Adrenal gland (tissue), 19 donors: ENCODE measurements at regions of chr7 and their contacts with region 1.

Region 1: GRCh38 chr7:100852048-100852872 is at the start of gene SLC12A9:
- DNase-seq: peak; percentile 91 to 95 (median 93)
- H3K4me3 ChIP-seq: peak within 1 kb of the TSS in 3 of 4 donors; percentile 73 to 94 (median 75)
- H3K27ac ChIP-seq: peak within 1 kb of the TSS in 1 of 5 donors; percentile 75
- H3K4me1 ChIP-seq: peaks cover 4 to 12% of the 10 kb centered on the region in 2 donors
- H3K27me3 ChIP-seq: no peaks in the 10 kb centered on the region
- CTCF ChIP-seq: peak; percentile 87 to 97 (median 94)
- POLR2A ChIP-seq: peak; percentile 33 to 44
- total RNA-seq, gene SLC12A9: 8.0 to 35.1 (median 19.7) TPM

Region 2: GRCh38 chr7:100705753-100706671 is 146.2 kb before region 1 on chr7 and contains the start of gene POP7:
- intact Hi-C with region 1: loop called (anchors 5 kb)
- DNase-seq: peak; percentile 98 to 99 (median 99)
- H3K4me3 ChIP-seq: peak within 1 kb of the TSS; percentile 83 to 100 (median 92)
- H3K27ac ChIP-seq: peak within 1 kb of the TSS; percentile 48 to 93 (median 89)
- H3K4me1 ChIP-seq: peaks cover 15 to 16% of the 10 kb centered on the region in 2 donors
- H3K27me3 ChIP-seq: no peaks in the 10 kb centered on the region
- CTCF ChIP-seq: no peak
- POLR2A ChIP-seq: peak in 1 of 2 donors; percentile 70
- total RNA-seq, gene POP7: 8.7 to 60.9 (median 35.1) TPM

Region 3: DNA sequence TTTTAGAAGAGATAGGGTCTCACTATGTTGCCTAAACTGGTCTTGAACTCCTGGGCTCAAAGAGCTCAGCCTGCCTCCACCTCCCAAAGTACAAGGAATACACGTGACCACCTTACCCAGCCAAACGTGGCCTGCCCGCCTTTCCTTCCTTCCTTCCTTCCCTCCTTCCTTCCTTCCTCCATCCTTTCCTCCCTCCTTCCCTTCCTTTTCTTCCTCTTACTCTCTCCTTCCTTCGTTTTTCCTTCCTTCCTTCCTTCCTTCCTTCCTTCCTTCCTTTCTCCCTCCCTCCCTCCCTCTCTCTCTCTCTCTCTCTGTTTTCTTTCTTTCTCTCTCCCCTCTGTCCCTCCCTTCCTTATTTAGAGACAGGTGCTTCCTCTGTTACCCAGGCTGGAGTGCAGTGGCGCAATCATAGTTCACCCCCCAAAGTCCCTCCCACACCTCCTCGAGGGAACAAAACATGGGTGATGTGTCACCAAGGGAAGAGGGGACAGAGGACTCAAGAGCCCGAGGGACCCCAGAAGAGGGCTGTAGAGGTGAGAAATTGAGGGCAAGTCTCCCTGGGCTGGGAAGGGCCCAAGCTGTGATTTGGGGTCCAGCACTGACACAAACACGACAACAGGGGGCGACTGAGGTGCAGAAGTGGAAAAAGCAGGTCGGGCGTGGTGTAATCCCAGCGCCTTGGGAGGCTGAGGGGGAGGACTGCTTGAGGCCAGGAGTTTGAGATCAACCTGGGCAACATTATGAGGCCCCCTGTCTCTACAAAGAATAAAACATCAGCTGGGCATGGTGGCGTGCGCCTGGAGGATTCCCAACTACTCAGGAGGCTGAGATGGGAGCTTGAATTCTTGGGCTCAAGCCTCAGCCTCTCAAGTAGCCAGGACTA is 53.0 kb before region 1 on chr7:
- intact Hi-C with region 1: loop called (anchors 5 kb)
- DNase-seq: peak; percentile 68 to 87 (median 79)
- H3K4me3 ChIP-seq: no peak overlapping the region
- H3K27ac ChIP-seq: no peak overlapping the region
- H3K4me1 ChIP-seq: peaks cover 25 to 36% of the 10 kb centered on the region in 2 donors
- H3K27me3 ChIP-seq: no peaks in the 10 kb centered on the region
- CTCF ChIP-seq: peak; percentile 55 to 91 (median 80)
- POLR2A ChIP-seq: no peak